MCF 10A (cell line): ENCODE measurements at regions of chr15 and their contacts with region 1.

Region 1: GRCh38 chr15:68672781-68673205 is 94.0 kb downstream of the CORO2B start:
- DNase-seq: no peak
- H3K4me3 Mint-ChIP-seq: no peak overlapping the region
- H3K27ac Mint-ChIP-seq: no peak overlapping the region
- H3K4me1 Mint-ChIP-seq: peaks cover 8% of the 10 kb centered on the region
- H3K27me3 Mint-ChIP-seq: no peaks in the 10 kb centered on the region
- CTCF ChIP-seq: no peak

Region 2: DNA sequence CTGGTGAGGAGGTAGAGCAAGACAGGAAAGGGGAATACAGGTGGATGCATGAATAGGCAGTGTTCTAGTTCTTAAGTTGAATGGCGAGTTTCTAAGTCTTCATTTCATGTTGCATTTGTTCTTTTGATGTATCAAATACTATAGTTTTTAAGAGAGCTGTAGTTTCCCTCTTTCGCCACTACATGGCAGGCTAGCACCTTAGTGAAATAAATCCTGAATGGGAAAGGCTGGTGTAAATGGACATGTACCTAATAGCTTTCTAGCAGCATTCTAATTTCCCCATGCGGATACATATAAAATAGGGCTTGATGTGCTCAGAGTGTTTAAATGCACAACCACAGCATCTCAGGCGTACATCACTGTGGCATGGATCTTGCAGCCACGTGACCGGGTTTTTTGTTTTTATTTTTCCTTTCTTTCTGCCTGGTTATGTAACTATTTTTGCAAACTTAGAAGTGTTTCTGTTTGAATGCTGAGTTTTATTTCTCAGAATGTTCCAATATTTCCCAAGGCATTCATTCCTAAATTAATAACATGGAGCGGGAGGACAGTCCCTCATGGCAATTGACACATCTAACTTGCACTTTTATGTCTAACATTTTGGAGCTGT is 419.8 kb before region 1 on chr15:
- CTCF ChIA-PET with region 1: interaction called, 4 read pairs
- POLR2A ChIA-PET with region 1: interaction called, 4 read pairs
- intact Hi-C with region 1: loop called (anchors 5 kb)
- DNase-seq: peak; percentile 89
- H3K4me3 Mint-ChIP-seq: no peak overlapping the region
- H3K27ac Mint-ChIP-seq: no peak overlapping the region
- H3K4me1 Mint-ChIP-seq: no peaks in the 10 kb centered on the region
- H3K27me3 Mint-ChIP-seq: no peaks in the 10 kb centered on the region
- CTCF ChIP-seq: peak; percentile 68

Region 3: DNA sequence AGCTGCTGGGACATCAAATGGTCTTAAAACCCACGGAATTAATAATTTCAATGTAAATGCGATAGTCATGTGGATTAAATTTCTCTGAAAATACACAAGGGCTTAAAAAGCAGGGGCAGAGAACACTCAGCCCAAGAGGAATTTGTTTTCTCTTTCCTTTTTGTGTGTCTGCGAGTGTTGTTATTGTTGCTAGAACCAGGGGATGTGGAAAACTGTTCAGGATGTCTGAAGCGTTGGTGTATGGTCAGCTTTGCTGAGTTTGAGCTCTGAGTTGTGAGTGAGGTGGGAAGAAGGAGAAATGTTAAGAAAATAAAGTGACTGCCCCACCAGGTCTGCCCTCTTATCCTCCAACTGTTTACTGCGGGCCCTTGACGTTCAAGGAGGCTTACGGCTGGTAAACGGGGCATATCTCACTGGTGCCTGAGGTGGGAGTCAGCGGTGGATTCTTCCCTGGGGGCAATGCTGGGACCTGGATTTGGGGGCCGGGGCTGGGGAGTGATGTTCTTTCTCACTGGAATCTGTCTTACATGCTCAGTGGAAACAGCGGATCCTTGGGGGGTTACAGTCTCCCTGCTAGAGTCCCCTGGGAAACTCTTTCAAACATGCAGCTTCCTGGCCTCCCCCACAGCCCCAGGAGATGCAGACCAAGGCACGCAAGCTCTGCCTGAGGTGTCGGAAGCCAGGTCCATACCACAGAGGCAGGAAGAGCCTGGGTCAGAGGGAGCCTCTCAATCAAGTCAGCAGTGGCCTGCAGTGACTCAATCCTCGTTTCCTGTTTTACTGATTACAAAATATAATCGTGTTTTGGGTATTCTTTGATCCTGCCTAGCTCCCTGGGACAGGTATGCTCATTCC is 282.6 kb before region 1 on chr15:
- CTCF ChIA-PET with region 1: no interaction called
- POLR2A ChIA-PET with region 1: no interaction called
- intact Hi-C with region 1: no loop called
- DNase-seq: peak; percentile 69
- H3K4me3 Mint-ChIP-seq: no peak overlapping the region
- H3K27ac Mint-ChIP-seq: no peak overlapping the region
- H3K4me1 Mint-ChIP-seq: peaks cover 12% of the 10 kb centered on the region
- H3K27me3 Mint-ChIP-seq: peaks cover 10% of the 10 kb centered on the region
- CTCF ChIP-seq: no peak

Region 4: DNA sequence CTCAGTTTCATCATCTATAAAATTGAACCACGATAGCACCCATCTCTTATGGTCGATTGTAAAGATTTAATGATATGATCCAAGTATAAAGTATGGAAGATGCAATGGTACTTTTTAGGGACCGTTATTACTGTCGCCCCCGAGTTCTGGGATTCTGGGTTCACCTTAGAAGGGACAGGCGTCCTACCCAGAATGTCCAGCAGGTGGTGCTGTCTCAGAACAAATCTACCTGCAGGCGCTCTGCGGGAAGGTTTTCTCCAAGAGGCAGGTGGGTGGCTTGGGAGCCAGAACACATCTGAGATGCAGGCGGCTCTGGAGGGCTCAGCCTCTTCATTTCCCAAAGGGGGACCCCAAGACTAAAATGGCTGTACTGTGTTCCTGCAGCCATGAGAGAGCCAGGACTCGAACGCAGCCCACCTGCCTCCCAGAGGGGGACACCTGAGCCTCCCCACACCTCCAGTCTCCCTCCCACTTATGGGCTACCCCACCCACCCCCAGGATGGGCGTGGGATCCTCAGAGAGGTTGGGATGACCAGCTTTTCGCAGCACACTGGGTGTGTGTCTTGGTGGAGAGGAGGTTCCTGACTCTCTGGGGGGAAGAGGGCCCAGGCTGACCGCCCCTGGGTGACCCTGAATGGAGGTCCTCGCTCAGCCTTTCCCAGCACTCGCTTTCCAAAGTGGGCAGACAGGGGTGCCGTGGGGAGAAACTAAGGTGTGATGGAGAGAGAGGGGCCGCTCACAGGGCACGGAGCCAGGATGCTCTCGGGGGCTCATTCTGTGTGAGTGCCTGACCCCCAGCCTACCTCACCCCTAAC is 122.1 kb before region 1 on chr15:
- CTCF ChIA-PET with region 1: interaction called, 121 read pairs
- POLR2A ChIA-PET with region 1: interaction called, 3 read pairs
- intact Hi-C with region 1: loop called (anchors 1 kb)
- DNase-seq: peak; percentile 72
- H3K4me3 Mint-ChIP-seq: no peak overlapping the region
- H3K27ac Mint-ChIP-seq: no peak overlapping the region
- H3K4me1 Mint-ChIP-seq: no peaks in the 10 kb centered on the region
- H3K27me3 Mint-ChIP-seq: peaks cover 20% of the 10 kb centered on the region
- CTCF ChIP-seq: peak; percentile 84

Region 5: DNA sequence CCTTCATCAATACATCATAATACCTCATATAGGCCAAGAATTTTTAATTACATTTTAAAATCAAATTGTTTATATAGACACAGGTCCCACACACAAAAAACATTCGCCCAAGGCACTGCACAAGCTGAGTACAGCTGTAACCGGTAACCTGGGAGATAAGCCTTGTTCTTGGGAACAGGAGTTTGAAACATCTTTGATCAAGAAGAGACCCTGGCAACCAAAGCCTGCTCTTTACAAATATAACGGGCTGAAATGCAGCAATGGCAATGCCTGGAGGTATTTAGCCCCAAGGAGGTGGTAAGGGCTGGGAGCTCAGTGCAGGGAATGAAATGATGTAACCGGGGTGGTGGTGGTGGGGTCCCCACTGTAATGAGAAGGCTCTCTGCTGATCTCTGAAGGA is 101.2 kb before region 1 on chr15:
- CTCF ChIA-PET with region 1: interaction called, 18 read pairs
- POLR2A ChIA-PET with region 1: no interaction called
- intact Hi-C with region 1: loop called (anchors 5 kb)
- DNase-seq: no peak
- H3K4me3 Mint-ChIP-seq: no peak overlapping the region
- H3K27ac Mint-ChIP-seq: no peak overlapping the region
- H3K4me1 Mint-ChIP-seq: no peaks in the 10 kb centered on the region
- H3K27me3 Mint-ChIP-seq: peaks cover 14% of the 10 kb centered on the region
- CTCF ChIP-seq: no peak

Region 6: DNA sequence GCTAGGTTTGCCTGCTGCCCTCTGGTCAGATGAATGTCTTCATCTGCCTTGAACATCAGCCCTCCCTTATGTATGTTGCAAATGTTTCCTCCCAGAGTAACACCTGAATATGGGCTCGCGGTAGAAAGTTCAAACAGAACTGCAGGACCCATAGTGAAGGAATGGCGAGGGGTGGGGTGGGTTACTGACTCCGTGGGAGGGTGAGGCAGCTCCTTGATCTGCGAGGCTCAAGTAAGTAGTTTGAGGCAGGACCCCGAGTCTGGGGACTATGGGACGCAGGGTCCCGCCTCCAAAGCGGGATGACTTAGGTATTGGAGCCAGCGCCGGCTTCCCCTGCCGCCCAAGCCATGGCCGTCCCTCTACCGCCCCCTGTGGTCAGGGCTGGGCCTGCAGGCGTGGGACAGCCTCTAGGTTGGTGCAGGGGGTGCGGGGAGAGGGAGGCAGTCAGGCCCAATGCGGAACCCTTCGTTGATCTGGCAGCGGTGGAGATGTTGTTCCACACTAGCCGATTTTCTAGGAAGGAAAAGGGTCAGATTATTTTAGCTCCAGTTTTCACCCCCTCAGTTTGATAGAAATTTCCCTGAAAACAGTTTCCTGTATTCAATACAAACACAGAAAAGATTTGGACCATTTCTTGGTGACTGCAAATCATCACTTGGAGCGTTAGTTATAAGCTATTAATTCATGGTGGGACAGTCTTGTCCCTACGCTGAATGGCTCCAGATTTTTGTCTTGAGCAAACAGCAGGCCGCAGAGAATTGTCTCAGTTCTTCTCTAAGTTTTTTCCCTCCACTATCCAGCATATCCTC is 21.7 kb before region 1 on chr15:
- CTCF ChIA-PET with region 1: interaction called, 23 read pairs
- POLR2A ChIA-PET with region 1: no interaction called
- intact Hi-C with region 1: no loop called
- DNase-seq: peak; percentile 46
- H3K4me3 Mint-ChIP-seq: no peak overlapping the region
- H3K27ac Mint-ChIP-seq: no peak overlapping the region
- H3K4me1 Mint-ChIP-seq: no peaks in the 10 kb centered on the region
- H3K27me3 Mint-ChIP-seq: no peaks in the 10 kb centered on the region
- CTCF ChIP-seq: peak; percentile 75

Region 7: DNA sequence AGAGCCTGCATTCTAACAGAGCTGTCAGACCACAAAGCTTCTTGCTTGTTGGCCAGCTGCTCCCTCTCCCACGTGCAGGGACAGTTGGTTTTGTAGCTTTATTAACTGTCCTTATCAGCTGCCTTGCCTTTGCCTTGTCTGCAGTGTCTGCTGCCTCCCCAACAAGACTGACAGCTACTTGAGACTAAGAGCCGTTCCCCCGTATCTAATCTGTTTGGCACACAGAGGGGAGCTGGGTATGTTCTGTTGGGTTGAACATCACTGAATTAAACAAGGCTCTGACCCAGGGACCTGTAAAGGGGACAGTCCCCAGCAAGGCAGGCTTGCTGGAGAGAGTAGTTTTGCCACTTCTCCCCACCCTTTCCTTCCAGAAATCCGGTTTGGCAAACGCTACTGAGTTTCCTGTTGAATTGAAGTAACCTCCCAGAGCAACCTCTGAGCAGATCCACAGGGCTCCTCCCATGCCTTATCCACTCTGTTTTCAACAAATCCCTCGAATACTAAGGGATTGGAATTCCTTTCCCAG is 31.8 kb after region 1 on chr15:
- CTCF ChIA-PET with region 1: interaction called, 14 read pairs
- POLR2A ChIA-PET with region 1: no interaction called
- intact Hi-C with region 1: no loop called
- DNase-seq: no peak
- H3K4me3 Mint-ChIP-seq: no peak overlapping the region
- H3K27ac Mint-ChIP-seq: no peak overlapping the region
- H3K4me1 Mint-ChIP-seq: no peaks in the 10 kb centered on the region
- H3K27me3 Mint-ChIP-seq: peaks cover 15% of the 10 kb centered on the region
- CTCF ChIP-seq: no peak

Region 8: GRCh38 chr15:68773036-68773435 is 100.2 kb after region 1 on chr15:
- CTCF ChIA-PET with region 1: no interaction called
- POLR2A ChIA-PET with region 1: no interaction called
- intact Hi-C with region 1: no loop called
- DNase-seq: no peak
- H3K4me3 Mint-ChIP-seq: no peak overlapping the region
- H3K27ac Mint-ChIP-seq: no peak overlapping the region
- H3K4me1 Mint-ChIP-seq: peaks cover 8% of the 10 kb centered on the region
- H3K27me3 Mint-ChIP-seq: no peaks in the 10 kb centered on the region
- CTCF ChIP-seq: no peak

Region 9: GRCh38 chr15:68924866-68925560 is 252.2 kb after region 1 on chr15:
- CTCF ChIA-PET with region 1: interaction called, 15 read pairs
- POLR2A ChIA-PET with region 1: no interaction called
- intact Hi-C with region 1: no loop called
- DNase-seq: peak; percentile 83
- H3K4me3 Mint-ChIP-seq: no peak overlapping the region
- H3K27ac Mint-ChIP-seq: no peak overlapping the region
- H3K4me1 Mint-ChIP-seq: peaks cover 10% of the 10 kb centered on the region
- H3K27me3 Mint-ChIP-seq: peaks cover 11% of the 10 kb centered on the region
- CTCF ChIP-seq: peak; percentile 87